ENCODE measurements at regions of chrX and their contacts with region 1.

Region 1: DNA sequence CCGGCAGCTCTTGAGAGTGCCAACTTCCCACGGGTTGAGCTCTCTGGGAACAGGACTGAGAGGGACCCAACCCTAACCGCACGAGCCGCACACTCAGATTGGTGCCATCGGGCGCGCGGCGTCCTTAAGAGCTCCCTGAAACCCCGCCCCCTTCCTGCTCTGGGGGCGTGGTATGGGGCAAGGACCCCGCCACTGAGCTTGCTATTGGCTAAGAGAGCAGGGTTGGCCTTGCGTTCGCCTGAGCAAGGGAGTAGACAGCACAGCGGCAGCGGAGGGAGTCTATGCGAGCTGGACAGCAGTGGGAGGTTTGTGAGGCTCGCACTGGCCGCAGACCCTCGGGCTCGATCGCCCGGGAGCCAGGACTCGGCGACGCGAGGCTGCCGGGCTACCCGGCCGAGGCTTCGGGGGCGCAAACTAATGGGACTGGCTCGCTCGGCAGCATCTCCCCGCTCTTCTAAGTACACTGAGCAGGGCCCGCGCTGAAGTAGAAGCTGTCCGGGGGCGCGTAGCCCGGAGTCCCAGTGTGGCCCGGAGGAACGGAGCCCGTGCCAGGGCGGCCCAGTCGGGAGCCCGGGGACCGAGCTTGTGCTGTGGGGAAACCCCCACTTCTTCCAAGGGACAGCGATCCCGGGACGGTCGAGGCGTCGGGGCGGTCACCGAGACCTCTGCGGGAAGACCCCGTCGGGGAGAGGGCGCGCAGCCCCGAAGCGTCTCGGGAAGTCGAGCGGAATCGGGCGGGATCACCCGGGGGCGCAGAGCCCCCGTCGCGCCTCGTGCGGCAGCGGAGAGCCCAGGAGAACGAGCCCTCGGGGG is at the start of gene EFNB1:
- H3K4me3 ChIP-seq: peak within 1 kb of the TSS; percentile 58
- H3K27ac ChIP-seq: peak within 1 kb of the TSS; percentile 48; the same call in 1 of the 2 replicates
- H3K4me1 ChIP-seq: no peaks in the 10 kb centered on the region; the same call in 1 of the 2 replicates
- CTCF ChIP-seq: no peak

Region 2: DNA sequence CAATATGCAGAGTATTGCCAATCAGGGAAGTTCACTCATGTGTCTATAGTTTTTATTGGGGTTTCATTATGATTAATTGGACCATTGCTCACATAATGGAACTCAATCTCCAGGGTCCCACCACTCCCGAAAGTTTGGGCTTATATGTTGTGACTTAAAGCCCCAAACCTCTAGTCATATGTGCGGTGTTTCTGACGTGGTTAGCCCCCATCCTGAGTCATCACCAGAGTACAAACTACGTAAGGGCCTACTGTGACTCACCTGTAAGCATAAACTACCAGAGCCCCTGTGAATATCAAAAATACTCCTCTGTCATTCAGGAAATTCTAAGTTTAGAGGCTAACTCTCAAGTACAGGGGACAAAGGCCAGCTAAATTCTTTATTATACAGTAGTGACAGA is 324.7 kb before region 1 on chrX:
- CTCF ChIA-PET with region 1: no interaction called
- POLR2A ChIA-PET with region 1: no interaction called
- H3K4me3 ChIP-seq: no peak overlapping the region
- H3K27ac ChIP-seq: no peak overlapping the region
- H3K4me1 ChIP-seq: no peaks in the 10 kb centered on the region
- CTCF ChIP-seq: no peak

Region 3: GRCh38 chrX:68732906-68733493 is 95.9 kb before region 1 on chrX:
- CTCF ChIA-PET with region 1: interaction called, 18 read pairs
- POLR2A ChIA-PET with region 1: interaction called, 4 read pairs
- H3K4me3 ChIP-seq: no peak overlapping the region
- H3K27ac ChIP-seq: no peak overlapping the region
- H3K4me1 ChIP-seq: no peaks in the 10 kb centered on the region
- CTCF ChIP-seq: peak; percentile 83

Region 4: DNA sequence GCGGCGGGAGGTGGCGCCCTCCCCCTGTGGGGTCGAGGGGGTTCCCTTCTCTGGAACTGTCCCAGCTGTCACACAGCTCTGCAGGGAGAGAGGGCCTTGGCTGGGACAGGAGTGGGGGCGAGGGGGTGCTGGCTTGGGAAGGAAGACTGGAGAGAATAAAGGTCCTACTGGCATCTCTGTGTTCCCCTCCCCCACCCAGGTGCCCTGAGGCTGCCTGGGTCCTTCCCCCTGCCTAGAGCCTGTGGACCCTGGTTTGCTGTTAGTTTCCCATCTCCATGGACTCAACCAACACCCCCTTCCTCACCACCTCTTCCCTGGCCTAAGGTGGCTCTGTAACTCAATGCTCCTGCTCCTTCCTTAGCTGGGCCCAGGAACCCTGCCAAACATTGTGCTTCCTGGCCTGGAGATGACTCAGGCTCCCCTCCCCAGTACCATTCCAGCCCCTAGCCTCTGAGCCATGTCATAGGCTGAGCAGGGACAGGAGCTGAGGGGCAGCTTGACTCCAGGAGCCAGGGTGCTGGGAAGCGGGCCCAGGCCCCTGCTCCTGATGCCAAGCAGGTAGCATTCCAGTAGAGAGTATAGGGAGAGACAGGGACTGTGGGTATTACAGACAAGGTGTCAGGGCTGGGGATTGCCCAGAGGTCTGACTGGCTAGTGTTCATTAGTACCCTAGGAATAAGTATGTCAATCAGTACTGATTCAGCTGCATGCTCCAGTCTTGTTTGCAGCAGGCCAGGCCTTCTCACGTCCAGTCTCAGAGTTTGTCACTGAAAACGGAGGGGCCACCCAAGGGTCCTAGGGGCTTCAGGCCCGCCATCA is 100.6 kb after region 1 on chrX:
- CTCF ChIA-PET with region 1: interaction called, 4 read pairs
- POLR2A ChIA-PET with region 1: interaction called, 12 read pairs
- H3K4me3 ChIP-seq: no peak overlapping the region
- H3K27ac ChIP-seq: no peak overlapping the region
- H3K4me1 ChIP-seq: no peaks in the 10 kb centered on the region
- CTCF ChIP-seq: no peak

Region 5: GRCh38 chrX:69060631-69061408 is 231.9 kb after region 1 on chrX:
- CTCF ChIA-PET with region 1: interaction called, 24 read pairs
- POLR2A ChIA-PET with region 1: interaction called, 25 read pairs
- H3K4me3 ChIP-seq: no peak overlapping the region
- H3K27ac ChIP-seq: no peak overlapping the region; the same call in 1 of the 2 replicates
- H3K4me1 ChIP-seq: no peaks in the 10 kb centered on the region
- CTCF ChIP-seq: no peak

Region 6: GRCh38 chrX:69133921-69134542 is 305.1 kb after region 1 on chrX:
- CTCF ChIA-PET with region 1: interaction called, 12 read pairs
- POLR2A ChIA-PET with region 1: interaction called, 4 read pairs
- H3K4me3 ChIP-seq: no peak overlapping the region
- H3K27ac ChIP-seq: no peak overlapping the region
- H3K4me1 ChIP-seq: no peaks in the 10 kb centered on the region
- CTCF ChIP-seq: peak; percentile 79

Region 7: DNA sequence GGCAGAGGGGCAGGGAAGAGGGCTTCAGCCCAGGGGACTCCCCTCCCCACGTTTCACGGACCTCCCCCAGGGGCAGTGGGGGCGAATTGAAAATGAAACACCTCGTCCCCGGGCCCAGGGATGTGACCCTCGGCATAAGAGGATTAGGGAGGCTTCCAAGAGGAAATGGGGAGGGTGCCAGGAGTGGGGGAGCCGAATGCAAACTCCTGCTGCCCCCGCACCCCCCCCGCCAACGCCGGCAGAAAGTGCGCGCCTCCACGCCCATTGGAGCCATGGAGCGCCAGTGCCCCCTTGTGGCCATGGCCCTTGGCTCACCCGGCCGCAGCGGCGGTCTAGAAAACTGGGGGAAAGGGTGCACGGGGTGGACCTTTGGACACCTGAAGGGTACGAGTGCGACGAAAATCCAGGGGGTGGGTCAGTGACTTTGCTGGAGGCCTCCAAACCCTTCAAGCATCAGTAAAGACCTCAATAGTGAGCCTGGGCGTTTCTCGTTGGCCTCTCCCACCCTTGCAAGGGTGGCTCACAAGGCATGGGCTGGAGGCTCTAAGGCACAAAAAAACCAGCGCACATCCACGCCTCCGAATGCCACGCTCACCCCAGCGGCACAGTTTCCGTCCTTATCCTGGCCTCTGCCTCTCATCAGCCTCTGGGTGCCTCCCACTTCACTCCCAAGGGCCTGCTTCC is 457.1 kb after region 1 on chrX:
- CTCF ChIA-PET with region 1: interaction called, 27 read pairs
- POLR2A ChIA-PET with region 1: interaction called, 10 read pairs
- H3K4me3 ChIP-seq: no peak overlapping the region
- H3K27ac ChIP-seq: no peak overlapping the region
- H3K4me1 ChIP-seq: no peaks in the 10 kb centered on the region
- CTCF ChIP-seq: peak; percentile 95

Measured in HEK293 (cell line).